ENCODE measurements at regions of chr16 and their contacts with region 1.

Region 1: DNA sequence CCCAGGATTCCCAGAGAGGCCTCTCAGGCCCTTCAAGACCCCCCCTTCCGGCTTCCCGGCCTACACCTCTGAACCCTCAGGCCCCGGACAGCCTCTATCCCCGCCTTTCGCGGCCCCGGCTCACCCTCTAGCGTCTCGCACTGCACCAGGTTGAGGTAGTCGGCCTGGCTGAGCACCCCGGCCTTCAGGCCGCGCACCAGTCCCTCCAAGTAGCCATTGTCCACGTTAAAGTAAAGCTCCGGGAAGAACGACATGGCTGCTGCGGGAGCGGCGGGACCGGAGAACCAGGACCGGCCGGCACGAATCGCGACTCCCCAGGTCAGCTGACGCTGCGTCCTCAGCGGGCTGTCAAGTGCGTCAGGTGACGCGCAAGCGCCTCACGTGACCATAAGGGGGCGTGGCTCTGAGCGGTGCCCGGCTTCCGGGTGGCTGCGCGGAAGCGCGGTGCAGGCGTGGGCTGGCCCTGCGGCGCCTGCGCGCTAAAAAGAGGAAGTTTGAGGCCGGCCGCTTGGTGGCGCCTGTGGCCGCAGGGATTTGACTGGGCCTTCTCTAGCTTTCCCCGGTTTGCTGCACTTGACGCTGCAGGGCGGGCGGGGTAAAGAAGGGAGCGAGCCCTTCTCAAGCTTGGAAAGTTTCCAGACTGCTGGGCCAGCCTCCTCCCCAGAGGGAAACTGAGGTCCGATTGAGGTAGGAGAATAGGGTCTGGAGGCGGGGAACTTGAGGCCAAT is at the start of gene ATP6V0D1:
- DNase-seq: peak; percentile 99
- H3K4me3 Mint-ChIP-seq: peak within 1 kb of the TSS; percentile 99
- H3K27ac Mint-ChIP-seq: peak within 1 kb of the TSS; percentile 97
- H3K4me1 Mint-ChIP-seq: peaks cover 43% of the 10 kb centered on the region
- H3K27me3 Mint-ChIP-seq: no peaks in the 10 kb centered on the region
- total RNA-seq, gene ATP6V0D1: 25.0 to 26.3 TPM

Region 2: GRCh38 chr16:67246934-67247697 is 233.9 kb before region 1 on chr16 and contains the start of gene FHOD1:
- CTCF ChIA-PET with region 1: interaction called, 6 read pairs
- POLR2A ChIA-PET with region 1: interaction called, 3 read pairs
- intact Hi-C with region 1: loop called (anchors 1 kb)
- DNase-seq: peak; percentile 99
- H3K4me3 Mint-ChIP-seq: peak within 1 kb of the TSS; percentile 90
- H3K27ac Mint-ChIP-seq: peak within 1 kb of the TSS; percentile 86
- H3K4me1 Mint-ChIP-seq: peaks cover 47% of the 10 kb centered on the region
- H3K27me3 Mint-ChIP-seq: peaks cover 1% of the 10 kb centered on the region
- total RNA-seq, gene FHOD1: 96.3 to 111 TPM

Region 3: GRCh38 chr16:67326472-67327309 is 154.3 kb before region 1 on chr16 and contains the starts of genes KCTD19 and LRRC36:
- CTCF ChIA-PET with region 1: no interaction called
- POLR2A ChIA-PET with region 1: no interaction called
- intact Hi-C with region 1: no loop called
- DNase-seq: peak; percentile 78
- H3K4me3 Mint-ChIP-seq: peak within 1 kb of the TSS; percentile 76
- H3K27ac Mint-ChIP-seq: no peak within 1 kb of the TSS
- H3K4me1 Mint-ChIP-seq: peaks cover 5% of the 10 kb centered on the region
- H3K27me3 Mint-ChIP-seq: peaks cover 42% of the 10 kb centered on the region
- total RNA-seq, gene KCTD19: 1.2 to 2.5 TPM
- total RNA-seq, gene LRRC36: 0.63 to 1.00 TPM

Region 4: GRCh38 chr16:67404740-67405226 is 76.2 kb before region 1 on chr16:
- CTCF ChIA-PET with region 1: no interaction called
- POLR2A ChIA-PET with region 1: no interaction called
- intact Hi-C with region 1: no loop called
- DNase-seq: no peak
- H3K4me3 Mint-ChIP-seq: no peak overlapping the region
- H3K27ac Mint-ChIP-seq: no peak overlapping the region
- H3K4me1 Mint-ChIP-seq: no peaks in the 10 kb centered on the region
- H3K27me3 Mint-ChIP-seq: peaks cover 9% of the 10 kb centered on the region

Region 5: GRCh38 chr16:67447508-67448076 is 33.4 kb before region 1 on chr16:
- CTCF ChIA-PET with region 1: interaction called, 10 read pairs
- POLR2A ChIA-PET with region 1: no interaction called
- intact Hi-C with region 1: no loop called
- DNase-seq: peak; percentile 87
- H3K4me3 Mint-ChIP-seq: no peak overlapping the region
- H3K27ac Mint-ChIP-seq: no peak overlapping the region
- H3K4me1 Mint-ChIP-seq: no peaks in the 10 kb centered on the region
- H3K27me3 Mint-ChIP-seq: no peaks in the 10 kb centered on the region

Region 6: DNA sequence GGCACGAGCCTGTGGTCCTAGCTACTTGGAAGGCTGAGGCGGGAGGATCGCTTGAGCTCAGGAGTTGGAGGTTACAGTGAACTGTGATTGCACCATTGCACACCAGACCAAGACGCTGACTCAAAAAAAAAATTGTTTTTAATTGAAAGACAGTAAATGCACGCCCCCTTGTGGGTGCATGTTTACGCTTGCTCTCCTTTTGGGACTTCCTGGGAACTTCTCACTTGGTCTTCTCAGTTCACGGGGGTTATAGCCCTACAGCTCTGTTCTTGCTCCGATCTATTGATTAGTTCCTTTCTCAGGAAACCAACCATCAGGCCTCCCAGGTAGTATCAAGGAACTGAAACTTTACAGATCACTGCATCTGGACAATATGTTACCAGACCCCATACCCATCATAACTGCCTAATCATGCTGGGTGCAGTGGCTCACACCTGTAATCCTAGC is 33.4 kb after region 1 on chr16:
- CTCF ChIA-PET with region 1: interaction called, 58 read pairs
- POLR2A ChIA-PET with region 1: no interaction called
- intact Hi-C with region 1: loop called (anchors 1 kb)
- DNase-seq: peak; percentile 89
- H3K4me3 Mint-ChIP-seq: no peak overlapping the region
- H3K27ac Mint-ChIP-seq: peak overlapping the region; percentile 35
- H3K4me1 Mint-ChIP-seq: peaks cover 7% of the 10 kb centered on the region
- H3K27me3 Mint-ChIP-seq: no peaks in the 10 kb centered on the region

Region 7: DNA sequence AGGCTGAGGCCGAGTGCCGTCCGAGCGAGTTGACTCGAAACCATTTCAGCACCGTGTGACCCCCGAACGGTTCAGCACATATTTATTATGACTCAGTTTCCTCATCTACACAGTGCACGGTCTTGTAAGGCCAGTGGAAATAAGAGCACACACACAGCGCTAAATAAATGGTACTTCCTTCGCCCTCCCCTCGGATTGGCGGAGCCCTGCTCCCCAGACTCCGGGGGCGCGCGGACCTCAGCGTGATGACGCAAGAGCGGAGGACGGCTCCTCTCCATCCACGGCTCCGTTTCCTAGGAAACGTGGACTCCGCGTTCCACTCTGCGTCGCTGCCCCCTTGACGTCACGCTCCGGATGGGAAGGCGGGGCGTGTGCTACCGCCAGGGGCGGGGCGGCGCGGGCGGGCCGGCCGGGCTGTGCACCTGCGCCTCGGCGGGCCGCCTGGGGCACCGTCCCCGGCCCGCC is 179.6 kb after region 1 on chr16 and contains the start of gene PARD6A:
- CTCF ChIA-PET with region 1: no interaction called
- POLR2A ChIA-PET with region 1: interaction called, 4 read pairs
- intact Hi-C with region 1: loop called (anchors 1 kb)
- DNase-seq: peak; percentile 98
- H3K4me3 Mint-ChIP-seq: peak within 1 kb of the TSS; percentile 86
- H3K27ac Mint-ChIP-seq: peak within 1 kb of the TSS; percentile 87
- H3K4me1 Mint-ChIP-seq: peaks cover 27% of the 10 kb centered on the region
- H3K27me3 Mint-ChIP-seq: no peaks in the 10 kb centered on the region
- total RNA-seq, gene PARD6A: 11.2 to 11.5 TPM

Region 8: DNA sequence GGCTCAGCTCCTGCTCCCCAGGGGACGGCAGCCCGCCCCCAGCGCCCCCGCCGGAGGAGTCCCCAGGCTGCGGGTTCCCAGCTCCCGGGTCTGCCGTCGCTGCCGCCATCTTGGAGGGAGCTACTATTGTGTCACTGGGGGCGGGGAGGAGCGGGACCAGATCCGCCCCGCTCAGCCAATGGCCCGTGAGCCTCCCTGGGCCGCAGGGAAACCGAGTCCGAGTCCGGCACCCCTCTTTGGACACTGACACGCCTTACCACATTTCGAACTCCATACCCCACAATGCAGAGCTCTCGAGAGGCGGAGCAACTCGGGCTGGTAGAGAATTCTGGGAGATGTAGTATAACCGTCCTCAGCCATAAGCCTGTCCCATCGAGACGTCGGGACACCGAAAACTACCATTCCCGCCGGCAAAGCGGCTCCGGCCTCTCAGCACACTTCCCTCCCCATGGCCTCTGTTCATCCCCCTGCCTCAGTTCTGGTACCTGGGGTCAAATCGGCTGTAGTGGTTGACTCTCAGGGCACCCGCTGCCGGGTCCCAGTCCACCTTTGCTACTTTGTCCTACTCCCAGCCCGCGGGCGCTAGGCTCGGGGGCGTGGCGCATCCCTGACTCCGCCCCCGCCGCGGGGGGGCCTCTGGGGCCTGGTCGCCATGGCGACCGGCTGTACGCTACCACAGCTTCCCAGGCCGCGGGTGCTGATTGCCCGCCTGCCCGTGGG is 325.6 kb after region 1 on chr16 and contains the starts of genes RANBP10 and TSNAXIP1:
- CTCF ChIA-PET with region 1: interaction called, 4 read pairs
- POLR2A ChIA-PET with region 1: no interaction called
- intact Hi-C with region 1: loop called (anchors 1 kb)
- DNase-seq: peak; percentile 98
- H3K4me3 Mint-ChIP-seq: peak within 1 kb of the TSS; percentile 93
- H3K27ac Mint-ChIP-seq: peak within 1 kb of the TSS; percentile 91
- H3K4me1 Mint-ChIP-seq: peaks cover 39% of the 10 kb centered on the region
- H3K27me3 Mint-ChIP-seq: no peaks in the 10 kb centered on the region
- total RNA-seq, gene RANBP10: 14.9 to 18.1 TPM
- total RNA-seq, gene TSNAXIP1: 0.77 to 0.81 TPM